ENCODE measurements at regions of chr4 and their contacts with region 1.

Region 1: DNA sequence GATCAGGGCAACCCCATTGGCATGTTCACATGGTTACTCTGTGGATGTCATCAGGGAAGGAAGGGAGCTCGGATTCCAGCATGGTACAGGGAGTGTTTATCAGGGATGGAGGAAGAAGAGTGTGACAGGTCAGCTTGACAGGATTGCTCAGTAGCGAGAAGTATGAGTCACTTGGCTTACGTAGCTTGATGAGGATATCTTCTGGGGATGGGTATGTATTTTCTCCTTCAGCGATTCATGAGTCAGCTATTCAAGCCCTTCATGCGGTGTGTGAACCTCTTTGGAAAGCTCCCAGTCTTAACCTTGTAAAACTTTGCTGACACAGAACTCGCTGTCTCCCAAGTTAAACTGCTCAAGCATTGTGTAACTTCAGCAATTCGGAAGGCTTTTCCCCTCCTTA is 275.4 kb downstream of the ARHGAP10 start:
- DNase-seq: no peak
- CTCF ChIP-seq: no peak

Region 2: DNA sequence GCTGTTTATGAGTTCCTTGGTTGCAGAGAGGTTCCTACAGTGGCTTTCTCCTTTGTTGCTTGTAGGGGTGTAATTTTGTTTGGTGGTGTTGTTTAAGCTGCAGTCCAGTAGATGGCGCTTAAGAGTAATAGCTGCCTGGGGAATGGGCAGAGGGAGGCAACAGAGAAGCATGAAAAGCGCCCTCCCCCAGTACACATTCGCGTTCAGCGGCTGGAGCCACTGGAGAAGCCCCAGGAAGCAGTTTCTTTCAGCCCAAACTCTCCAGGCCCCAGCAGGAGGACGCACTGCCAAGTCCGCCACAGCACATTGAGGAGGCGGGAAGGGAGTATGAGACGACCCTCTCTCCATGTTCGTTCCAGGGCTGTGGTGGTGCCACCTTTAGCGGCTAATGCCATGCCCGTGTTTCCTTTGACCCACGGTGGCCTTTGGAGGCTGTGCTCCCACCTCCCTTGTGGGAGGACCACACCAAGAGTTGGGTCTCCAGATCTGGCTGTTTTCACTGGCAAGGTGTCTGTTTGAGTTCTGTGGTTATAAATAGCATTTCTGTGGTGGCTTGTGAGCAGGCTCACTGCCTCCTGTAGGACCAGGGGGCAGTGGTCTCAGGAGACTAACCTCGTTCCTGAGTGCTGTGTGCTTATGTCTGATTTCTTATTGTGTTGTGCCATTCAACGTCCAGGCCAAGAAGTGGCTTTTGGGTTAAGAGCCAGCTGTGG is 23.1 kb before region 1 on chr4:
- CTCF ChIA-PET with region 1: interaction called, 10 read pairs
- POLR2A ChIA-PET with region 1: no interaction called
- DNase-seq: peak; percentile 54
- CTCF ChIP-seq: peak; percentile 54

Region 3: DNA sequence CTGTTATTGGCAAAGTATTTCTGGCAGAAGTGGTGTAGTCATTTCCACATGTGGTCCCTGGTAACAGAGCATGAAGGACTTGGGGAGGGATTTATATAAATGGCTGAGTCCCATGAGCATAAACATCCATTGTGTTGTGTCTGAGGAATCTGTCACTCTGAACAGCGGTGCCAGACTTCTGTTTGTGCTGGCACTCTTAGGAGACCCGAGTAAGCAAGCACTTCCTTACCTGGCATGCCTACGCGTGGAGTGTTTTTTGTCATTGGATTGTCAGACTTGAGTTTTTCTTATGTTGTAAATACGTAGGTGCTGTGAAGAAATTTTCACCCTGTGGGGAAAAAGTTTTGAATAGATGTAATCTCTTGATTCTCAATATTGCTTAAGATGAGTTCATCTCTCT is 10.5 kb after region 1 on chr4:
- CTCF ChIA-PET with region 1: interaction called, 20 read pairs
- POLR2A ChIA-PET with region 1: no interaction called
- DNase-seq: no peak
- CTCF ChIP-seq: no peak

Region 4: GRCh38 chr4:148495471-148495870 is 488.2 kb after region 1 on chr4:
- CTCF ChIA-PET with region 1: no interaction called
- POLR2A ChIA-PET with region 1: no interaction called
- DNase-seq: no peak
- CTCF ChIP-seq: no peak